ENCODE measurements at regions of chr1 and their contacts with region 1.

Region 1: GRCh38 chr1:161374373-161374772 is 6.7 kb upstream of the CFAP126 start:
- DNase-seq: no peak
- H3K4me3 ChIP-seq: no peak overlapping the region
- H3K27ac ChIP-seq: no peak overlapping the region
- H3K4me1 ChIP-seq: peaks cover 0 to 9% (median 0%) of the 10 kb centered on the region in 3 donors
- H3K27me3 ChIP-seq: no peaks in the 10 kb centered on the region
- CTCF ChIP-seq: peak in 2 of 6 experiments; percentile 5 to 20
- POLR2A ChIP-seq: no peak

Region 2: DNA sequence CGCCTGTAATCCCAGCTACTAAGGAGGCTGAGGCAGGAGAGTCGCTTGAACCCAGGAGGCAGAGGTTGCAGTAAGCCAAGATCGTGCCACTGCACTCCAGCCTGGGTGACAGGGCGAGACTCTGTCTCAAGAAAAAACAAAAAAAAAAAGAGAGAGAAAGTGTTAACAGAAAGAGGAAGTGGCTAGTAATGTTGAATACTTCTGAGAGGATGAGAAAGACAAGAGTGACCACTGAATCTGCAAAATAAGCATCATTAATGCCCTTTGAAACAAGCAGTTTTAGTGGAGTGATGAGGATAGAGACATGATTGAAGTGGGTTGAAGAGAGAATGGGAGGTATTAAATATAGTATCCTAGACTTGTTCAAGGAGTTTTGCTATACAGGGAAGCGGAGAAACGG is 76.3 kb before region 1 on chr1:
- intact Hi-C with region 1: loop called (anchors 10 kb)
- DNase-seq: no peak
- H3K4me3 ChIP-seq: no peak overlapping the region
- H3K27ac ChIP-seq: no peak overlapping the region
- H3K4me1 ChIP-seq: no peaks in the 10 kb centered on the region
- H3K27me3 ChIP-seq: no peaks in the 10 kb centered on the region
- CTCF ChIP-seq: no peak
- POLR2A ChIP-seq: no peak

Measured in esophagus squamous epithelium (tissue), 5 donors.